ENCODE measurements at regions of chr4 and their contacts with region 1.

Region 1: DNA sequence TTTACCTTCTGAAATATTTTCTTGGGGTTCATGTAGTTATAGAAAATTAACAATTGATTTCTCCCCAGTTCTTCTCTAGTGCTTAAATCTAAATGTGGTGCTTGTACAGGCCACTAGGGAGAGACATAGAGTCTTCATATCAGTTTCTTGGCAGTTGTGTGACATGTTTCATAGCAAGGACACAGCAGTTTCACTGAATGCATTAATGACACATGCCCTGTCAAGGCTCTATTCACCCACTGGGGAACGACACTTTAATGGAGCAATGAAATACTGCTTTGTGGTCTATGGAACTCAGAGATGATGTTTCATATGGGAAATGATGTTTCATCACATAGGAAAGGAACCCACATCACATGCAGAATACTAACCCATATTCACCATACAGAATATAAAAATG is 2.8 kb downstream of the VEGFC start:
- DNase-seq: no peak
- H3K4me3 ChIP-seq: peak overlapping the region; percentile 78
- CTCF ChIP-seq: peak; percentile 59

Region 2: GRCh38 chr4:176735300-176735699 is 54.7 kb before region 1 on chr4:
- CTCF ChIA-PET with region 1: no interaction called
- POLR2A ChIA-PET with region 1: no interaction called
- DNase-seq: no peak
- H3K4me3 ChIP-seq: no peak overlapping the region
- CTCF ChIP-seq: no peak

Region 3: DNA sequence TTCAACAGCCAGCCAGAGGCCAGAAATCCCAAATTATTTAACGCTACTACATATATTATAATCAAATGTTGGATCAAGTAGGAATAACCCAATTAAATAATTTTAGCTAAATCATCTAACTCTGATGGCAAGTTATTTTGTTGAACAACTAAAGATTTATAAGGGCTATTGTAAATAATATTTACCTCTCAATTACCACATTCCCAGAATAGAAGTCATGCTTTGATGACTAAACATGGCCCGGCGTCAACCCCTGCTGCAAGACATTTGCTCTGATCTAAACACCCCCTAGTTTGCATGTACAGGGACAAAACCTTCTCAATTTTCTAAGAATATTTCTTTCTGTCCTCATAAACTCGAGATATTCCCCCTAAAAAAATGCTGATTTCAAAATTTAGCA is 11.5 kb before region 1 on chr4:
- CTCF ChIA-PET with region 1: interaction called, 13 read pairs
- POLR2A ChIA-PET with region 1: interaction called, 3 read pairs
- DNase-seq: no peak
- H3K4me3 ChIP-seq: no peak overlapping the region
- CTCF ChIP-seq: no peak

Region 4: DNA sequence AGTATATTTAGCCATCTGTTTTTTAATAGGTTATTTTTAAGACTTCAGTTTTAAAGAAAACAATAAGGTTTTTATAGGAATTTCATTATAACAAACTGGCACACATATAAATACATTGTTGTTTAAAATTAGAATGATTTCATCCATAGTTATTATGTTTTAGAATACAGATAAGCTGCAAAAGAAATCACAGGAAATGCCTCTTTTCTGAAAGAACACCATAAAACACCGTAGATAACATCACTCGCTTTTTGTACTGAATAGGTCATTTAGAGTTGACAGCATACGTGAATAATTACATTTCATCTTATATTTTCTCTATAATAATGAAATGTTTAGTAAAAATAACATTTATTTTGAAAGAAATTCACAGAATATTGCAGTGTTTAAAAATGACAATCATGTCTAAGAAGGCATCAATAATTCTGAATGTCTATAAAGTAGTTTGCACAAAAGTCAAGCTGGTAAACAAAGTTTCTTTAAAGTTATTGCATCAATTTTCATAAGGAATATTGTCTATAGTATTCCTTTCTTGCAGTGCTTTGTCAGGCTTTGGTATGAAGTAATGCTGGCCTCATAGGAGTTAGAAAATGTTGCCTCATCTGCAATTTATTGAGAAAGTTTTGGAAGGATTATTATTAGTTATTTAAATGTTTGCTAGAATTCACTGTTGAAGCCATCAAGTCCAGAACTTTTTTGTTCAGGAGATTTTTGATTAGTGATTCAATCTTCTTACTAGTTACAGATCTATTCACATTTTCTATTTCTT is 20.7 kb after region 1 on chr4:
- CTCF ChIA-PET with region 1: no interaction called
- POLR2A ChIA-PET with region 1: no interaction called
- DNase-seq: no peak
- H3K4me3 ChIP-seq: no peak overlapping the region
- CTCF ChIP-seq: no peak

Region 5: DNA sequence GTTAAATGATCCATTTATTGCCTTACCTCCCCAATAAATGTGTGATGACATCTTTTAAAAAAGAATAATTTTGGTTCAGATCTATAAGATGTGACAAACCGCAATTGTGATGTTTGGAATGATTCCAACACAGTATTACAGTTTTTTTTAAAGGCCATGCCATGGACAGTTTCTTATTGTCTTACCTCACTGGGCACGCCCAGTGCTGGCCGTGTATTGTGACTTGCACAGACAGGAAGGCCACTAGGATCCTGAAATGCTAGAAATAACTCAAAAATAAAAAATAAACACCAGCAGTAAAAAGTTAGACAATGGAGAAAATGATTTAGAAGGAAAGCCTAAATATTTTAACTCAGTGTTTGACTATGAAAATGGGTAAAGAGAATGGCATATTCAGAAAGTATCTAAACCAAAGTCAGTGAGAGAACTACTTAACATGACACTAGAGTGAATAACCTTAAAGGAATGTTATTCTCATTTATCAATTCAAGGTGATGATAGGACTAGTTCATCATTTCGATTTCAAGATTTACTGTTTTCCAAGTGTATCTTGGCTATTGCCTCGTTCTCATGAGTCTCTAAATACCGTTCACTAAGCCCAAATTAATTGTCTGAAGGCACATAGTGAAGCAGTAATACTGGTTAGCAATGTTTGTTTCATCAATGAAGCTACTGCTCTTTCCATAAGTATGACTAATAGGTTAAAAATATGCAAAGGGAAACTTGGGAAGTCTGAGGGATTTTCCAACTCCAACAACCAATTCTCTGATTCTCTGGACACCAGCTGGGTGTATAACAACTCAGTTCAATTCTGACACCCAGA is 48.9 kb after region 1 on chr4:
- CTCF ChIA-PET with region 1: interaction called, 3 read pairs
- POLR2A ChIA-PET with region 1: interaction called, 11 read pairs
- DNase-seq: peak; percentile 77
- H3K4me3 ChIP-seq: no peak overlapping the region
- CTCF ChIP-seq: no peak

Region 6: GRCh38 chr4:176883681-176884418 is 93.9 kb after region 1 on chr4:
- CTCF ChIA-PET with region 1: no interaction called
- POLR2A ChIA-PET with region 1: interaction called, 33 read pairs
- DNase-seq: peak; percentile 96
- H3K4me3 ChIP-seq: no peak overlapping the region; the same call in 1 of the 2 replicates
- CTCF ChIP-seq: no peak

Measured in AG04449 (cell line).